ENCODE measurements at regions of chr19 and their contacts with region 1.

Region 1: GRCh38 chr19:4393947-4394590 is 6.3 kb downstream of the SH3GL1 start:
- DNase-seq: no peak
- ATAC-seq: no peak
- H3K4me3 ChIP-seq: no peak overlapping the region
- H3K27ac ChIP-seq: peak overlapping the region in 2 of 10 donors; percentile 15 to 44
- H3K4me1 ChIP-seq: peaks cover 43 to 94% (median 84%) of the 10 kb centered on the region in 9 donors
- H3K27me3 ChIP-seq: no peaks in the 10 kb centered on the region
- CTCF ChIP-seq: no peak

Region 2: GRCh38 chr19:4369888-4370260 is 24.2 kb before region 1 on chr19:
- intact Hi-C with region 1: loop called in 2 of 10 experiments (anchors 1 to 2 kb)
- DNase-seq: peak in 1 of 2 donors; percentile 57
- ATAC-seq: peak in 7 of 8 donors; percentile 20 to 52 (median 43)
- H3K4me3 ChIP-seq: peak overlapping the region in 9 of 10 donors; percentile 15 to 43 (median 36)
- H3K27ac ChIP-seq: peak overlapping the region; percentile 53 to 93 (median 80)
- H3K4me1 ChIP-seq: peaks cover 48 to 82% (median 76%) of the 10 kb centered on the region in 9 donors
- H3K27me3 ChIP-seq: no peaks in the 10 kb centered on the region
- CTCF ChIP-seq: peak in 7 of 9 donors; percentile 39 to 70 (median 55)

Region 3: GRCh38 chr19:4375164-4376027 is 18.7 kb before region 1 on chr19:
- intact Hi-C with region 1: loop called in 2 of 10 experiments (anchors 1 to 2 kb)
- DNase-seq: no peak
- ATAC-seq: peak in 2 of 8 donors; percentile 1 to 2
- H3K4me3 ChIP-seq: no peak overlapping the region
- H3K27ac ChIP-seq: peak overlapping the region; percentile 26 to 96 (median 81)
- H3K4me1 ChIP-seq: peaks cover 60 to 96% (median 93%) of the 10 kb centered on the region in 9 donors
- H3K27me3 ChIP-seq: no peaks in the 10 kb centered on the region
- CTCF ChIP-seq: peak in 3 of 9 donors; percentile 21 to 36 (median 32)